Stomach (tissue), 19 donors: ENCODE measurements at regions of chr3 and their contacts with region 1.

Region 1: DNA sequence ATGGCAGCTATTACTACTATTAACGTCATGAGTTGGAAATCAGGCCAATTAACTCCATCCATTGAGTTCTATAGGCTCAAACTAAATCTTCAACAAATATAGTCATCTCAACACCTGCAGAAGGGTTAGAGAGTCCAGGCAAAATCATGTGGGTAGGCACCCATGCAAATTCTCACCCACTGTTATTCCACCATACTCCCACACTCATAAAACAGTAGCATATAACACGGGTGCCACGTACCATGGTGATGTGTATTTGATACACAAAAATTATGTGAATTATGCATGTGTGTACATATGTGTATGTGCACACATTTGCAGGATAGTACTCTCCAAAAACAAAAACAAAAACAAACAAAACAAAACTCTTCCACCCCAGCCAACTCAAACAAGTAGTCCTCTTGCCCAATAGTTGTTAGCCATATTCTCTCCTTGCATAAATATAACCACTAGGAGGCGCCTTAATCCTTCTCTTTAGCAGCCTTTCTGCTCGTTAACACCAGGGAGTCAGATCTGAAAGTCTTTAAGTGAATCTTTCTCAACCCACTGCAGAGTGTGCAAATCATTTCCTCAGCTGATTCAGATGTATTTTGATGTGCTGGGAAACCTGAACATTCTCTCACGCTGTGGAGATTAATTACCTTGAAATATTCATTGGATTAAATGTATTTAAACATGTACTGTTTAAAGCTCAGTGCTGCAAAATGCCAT is 38.0 kb upstream of the COPB2 start:
- DNase-seq: peak in 1 of 2 donors; percentile 86
- H3K4me3 ChIP-seq: no peak overlapping the region
- H3K27ac ChIP-seq: no peak overlapping the region
- H3K4me1 ChIP-seq: peaks cover 0 to 4% (median 0%) of the 10 kb centered on the region in 4 donors
- H3K27me3 ChIP-seq: no peaks in the 10 kb centered on the region
- CTCF ChIP-seq: peak in 5 of 7 experiments; percentile 70 to 81 (median 78)
- EP300 ChIP-seq: no peak
- POLR2A ChIP-seq: no peak

Region 2: GRCh38 chr3:139561959-139562676 is 134.7 kb after region 1 on chr3:
- intact Hi-C with region 1: loop called (anchors 10 kb)
- DNase-seq: peak in 1 of 2 donors; percentile 74
- H3K4me3 ChIP-seq: no peak overlapping the region
- H3K27ac ChIP-seq: no peak overlapping the region
- H3K4me1 ChIP-seq: no peaks in the 10 kb centered on the region
- H3K27me3 ChIP-seq: no peaks in the 10 kb centered on the region
- CTCF ChIP-seq: peak in 5 of 7 experiments; percentile 40 to 78 (median 59)
- EP300 ChIP-seq: no peak
- POLR2A ChIP-seq: no peak

Region 3: DNA sequence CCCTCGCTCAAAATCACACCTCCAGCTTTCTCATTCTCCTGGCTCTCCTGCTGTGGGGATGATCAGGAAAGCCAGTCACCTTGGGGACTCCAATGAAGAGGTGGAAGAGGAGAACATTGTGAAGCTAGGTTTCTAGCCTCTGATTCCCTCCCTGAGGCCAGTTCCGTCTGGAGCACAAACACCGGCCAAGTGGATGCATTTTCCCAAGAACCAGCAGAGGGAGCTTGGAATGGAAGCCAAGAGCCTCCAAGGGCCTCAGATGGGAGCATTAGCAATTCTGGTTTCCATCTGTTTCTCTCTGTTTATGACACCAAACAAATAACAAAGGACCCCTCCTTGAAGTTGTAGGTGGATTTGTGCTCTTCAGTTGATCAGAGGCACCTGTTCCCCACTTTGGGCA is 291.0 kb after region 1 on chr3:
- intact Hi-C with region 1: no loop called
- DNase-seq: peak in 1 of 2 donors; percentile 53
- H3K4me3 ChIP-seq: no peak overlapping the region
- H3K27ac ChIP-seq: no peak overlapping the region
- H3K4me1 ChIP-seq: no peaks in the 10 kb centered on the region
- H3K27me3 ChIP-seq: no peaks in the 10 kb centered on the region
- CTCF ChIP-seq: peak in 1 of 7 experiments; percentile 7
- EP300 ChIP-seq: no peak
- POLR2A ChIP-seq: no peak

Region 4: GRCh38 chr3:139940622-139941021 is 513.2 kb after region 1 on chr3:
- intact Hi-C with region 1: no loop called
- DNase-seq: no peak
- H3K4me3 ChIP-seq: no peak overlapping the region
- H3K27ac ChIP-seq: no peak overlapping the region
- H3K4me1 ChIP-seq: peaks cover 7 to 16% (median 9%) of the 10 kb centered on the region in 4 donors
- H3K27me3 ChIP-seq: peaks cover under 1 to 55% (median 13%) of the 10 kb centered on the region in 3 donors
- CTCF ChIP-seq: no peak
- EP300 ChIP-seq: no peak
- POLR2A ChIP-seq: no peak